WTC11 (cell line): ENCODE measurements at regions of chr6 and their contacts with region 1.

Region 1: DNA sequence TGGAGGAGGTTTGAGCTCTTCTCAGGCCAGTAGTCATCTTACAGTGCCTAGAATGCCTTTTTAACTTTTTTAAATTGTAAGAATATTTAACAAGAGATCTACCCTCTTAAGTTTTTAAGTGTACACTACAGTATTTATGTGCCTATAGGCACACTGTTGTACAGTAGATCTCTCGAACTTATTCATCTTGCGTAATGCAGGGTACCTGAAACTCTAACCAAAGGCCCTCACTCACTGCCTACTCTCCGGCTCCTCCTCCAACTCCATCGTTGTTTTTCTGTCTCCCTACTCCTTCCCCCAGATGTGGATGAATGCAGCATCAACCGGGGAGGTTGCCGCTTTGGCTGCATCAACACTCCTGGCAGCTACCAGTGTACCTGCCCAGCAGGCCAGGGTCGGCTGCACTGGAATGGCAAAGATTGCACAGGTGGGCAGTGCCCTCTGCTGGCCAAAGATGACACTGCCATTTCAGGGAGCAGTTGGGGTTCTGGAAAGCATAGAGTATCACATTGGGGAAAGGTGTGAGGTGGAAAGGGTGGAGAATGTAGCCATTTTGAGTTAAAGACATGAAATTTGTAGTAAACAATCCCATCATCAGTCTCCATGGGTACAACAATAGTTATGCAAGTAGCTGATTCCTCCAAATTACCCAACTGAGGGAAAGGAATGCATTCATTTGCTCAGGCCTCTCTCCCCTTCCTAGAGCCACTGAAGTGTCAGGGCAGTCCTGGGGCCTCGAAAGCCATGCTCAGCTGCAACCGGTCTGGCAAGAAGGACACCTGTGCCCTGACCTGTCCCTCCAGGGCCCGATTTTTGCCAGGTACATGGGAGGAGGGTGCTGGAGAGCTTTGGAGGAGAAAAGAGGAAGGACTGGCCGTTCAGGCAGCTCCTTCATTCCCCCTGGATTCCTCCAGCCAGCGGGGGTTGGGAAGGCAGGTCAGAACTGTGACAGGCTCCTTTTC is 18.4 kb upstream of the ZNF76 start:
- DNase-seq: peak; percentile 95
- ATAC-seq: peak; percentile 70
- H3K4me3 Mint-ChIP-seq: no peak overlapping the region
- H3K27ac Mint-ChIP-seq: no peak overlapping the region
- H3K4me1 Mint-ChIP-seq: peaks cover 52% of the 10 kb centered on the region
- H3K27me3 Mint-ChIP-seq: peaks cover 48% of the 10 kb centered on the region
- CTCF ChIP-seq: peak; percentile 98

Region 2: DNA sequence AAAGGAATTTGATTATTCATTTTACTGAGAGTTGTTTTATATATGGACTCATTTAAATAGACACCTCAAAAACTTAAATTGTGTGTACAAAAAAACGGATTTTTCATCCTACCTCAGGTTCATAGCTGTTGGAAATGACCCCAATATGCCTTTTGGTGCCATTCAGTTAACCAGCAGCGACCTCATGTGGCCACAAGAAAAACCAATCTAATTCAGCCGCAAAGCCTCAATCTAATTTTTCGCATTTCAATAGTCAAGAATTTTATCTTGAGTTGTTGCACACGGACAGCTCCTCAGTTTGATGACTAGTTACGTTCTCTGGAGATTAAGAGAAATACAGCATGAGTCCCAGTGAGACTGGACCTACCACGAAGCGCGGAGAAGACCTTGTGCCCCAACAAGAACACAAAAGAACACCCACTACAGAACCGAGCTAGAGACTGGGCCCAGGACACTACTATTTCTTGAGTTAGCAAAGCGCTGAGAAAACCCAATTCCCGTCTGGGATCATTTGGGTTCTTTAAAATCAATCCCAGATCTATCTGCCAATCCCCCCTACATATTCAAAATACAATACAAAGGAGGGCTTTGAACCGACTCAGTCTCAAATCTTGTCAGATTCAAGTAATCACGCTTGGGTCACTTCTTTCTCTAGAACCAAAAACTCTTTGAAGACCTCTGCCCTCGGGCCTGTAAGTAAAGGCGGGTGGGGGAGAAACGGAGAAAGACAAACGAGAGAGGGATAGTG is 101.0 kb before region 1 on chr6:
- CTCF ChIA-PET with region 1: interaction called, 20 read pairs
- POLR2A ChIA-PET with region 1: no interaction called
- DNase-seq: peak; percentile 39
- ATAC-seq: peak; percentile 25
- H3K4me3 Mint-ChIP-seq: no peak overlapping the region
- H3K27ac Mint-ChIP-seq: no peak overlapping the region
- H3K4me1 Mint-ChIP-seq: peaks cover 9% of the 10 kb centered on the region
- H3K27me3 Mint-ChIP-seq: peaks cover 24% of the 10 kb centered on the region
- CTCF ChIP-seq: peak; percentile 76

Region 3: GRCh38 chr6:35173427-35174087 is 67.6 kb before region 1 on chr6:
- CTCF ChIA-PET with region 1: interaction called, 23 read pairs
- POLR2A ChIA-PET with region 1: no interaction called
- DNase-seq: no peak
- ATAC-seq: peak; percentile 32
- H3K4me3 Mint-ChIP-seq: no peak overlapping the region
- H3K27ac Mint-ChIP-seq: no peak overlapping the region
- H3K4me1 Mint-ChIP-seq: peaks cover 4% of the 10 kb centered on the region
- H3K27me3 Mint-ChIP-seq: peaks cover 3% of the 10 kb centered on the region; the same call in 1 of the 2 replicates
- CTCF ChIP-seq: no peak

Region 4: DNA sequence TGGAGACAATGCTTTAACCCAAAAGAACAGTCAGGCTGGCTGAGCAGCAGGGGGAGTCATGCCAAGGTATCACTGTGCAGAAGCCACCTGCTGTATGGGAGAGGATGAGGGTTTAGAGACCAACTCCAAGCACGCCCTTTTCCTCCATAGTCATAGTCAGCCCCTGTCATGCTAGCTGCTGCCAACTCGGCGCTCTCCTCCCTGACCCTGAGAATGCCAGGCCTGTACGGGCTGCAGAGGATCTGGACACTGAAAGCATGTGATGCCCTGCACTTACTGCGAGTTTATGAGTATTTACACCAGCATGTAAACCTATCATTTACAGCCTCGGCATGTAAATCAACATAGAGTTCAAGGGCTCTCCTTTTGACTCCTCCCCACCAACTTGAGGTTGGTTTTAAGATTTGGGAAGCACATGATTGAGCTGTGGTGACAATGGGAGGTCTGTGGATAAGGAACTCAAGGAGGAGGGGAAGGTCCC is 39.0 kb before region 1 on chr6:
- CTCF ChIA-PET with region 1: interaction called, 107 read pairs
- POLR2A ChIA-PET with region 1: interaction called, 3 read pairs
- DNase-seq: no peak
- ATAC-seq: peak; percentile 65
- H3K4me3 Mint-ChIP-seq: no peak overlapping the region
- H3K27ac Mint-ChIP-seq: no peak overlapping the region
- H3K4me1 Mint-ChIP-seq: peaks cover 4% of the 10 kb centered on the region
- H3K27me3 Mint-ChIP-seq: peaks cover 39% of the 10 kb centered on the region
- CTCF ChIP-seq: no peak

Region 5: DNA sequence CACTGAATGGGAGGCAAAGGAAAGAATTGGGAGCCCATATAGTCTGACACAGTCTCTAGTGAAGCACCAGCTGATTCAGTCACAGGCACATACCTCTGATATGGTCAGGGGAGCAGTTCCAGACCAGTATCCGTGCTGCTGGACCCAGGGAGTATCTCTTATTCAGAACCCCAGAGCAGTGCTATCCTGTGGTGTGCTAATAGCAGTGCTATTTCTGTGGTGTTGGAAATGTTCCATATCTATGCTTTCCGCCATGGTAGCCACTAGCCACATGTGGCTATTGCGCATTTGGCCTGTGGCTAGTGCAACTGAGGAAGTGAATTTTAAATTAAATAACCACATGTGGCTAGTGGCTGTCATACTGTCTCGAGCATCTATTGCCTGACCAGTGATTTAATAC is 16.4 kb before region 1 on chr6:
- CTCF ChIA-PET with region 1: interaction called, 40 read pairs
- POLR2A ChIA-PET with region 1: interaction called, 3 read pairs
- DNase-seq: no peak
- ATAC-seq: no peak
- H3K4me3 Mint-ChIP-seq: no peak overlapping the region
- H3K27ac Mint-ChIP-seq: no peak overlapping the region
- H3K4me1 Mint-ChIP-seq: 0 out of 2 replicates have a peak, but pooled peaks cover 3% of the 10 kb centered on the region
- H3K27me3 Mint-ChIP-seq: peaks cover 60% of the 10 kb centered on the region
- CTCF ChIP-seq: no peak

Region 6: DNA sequence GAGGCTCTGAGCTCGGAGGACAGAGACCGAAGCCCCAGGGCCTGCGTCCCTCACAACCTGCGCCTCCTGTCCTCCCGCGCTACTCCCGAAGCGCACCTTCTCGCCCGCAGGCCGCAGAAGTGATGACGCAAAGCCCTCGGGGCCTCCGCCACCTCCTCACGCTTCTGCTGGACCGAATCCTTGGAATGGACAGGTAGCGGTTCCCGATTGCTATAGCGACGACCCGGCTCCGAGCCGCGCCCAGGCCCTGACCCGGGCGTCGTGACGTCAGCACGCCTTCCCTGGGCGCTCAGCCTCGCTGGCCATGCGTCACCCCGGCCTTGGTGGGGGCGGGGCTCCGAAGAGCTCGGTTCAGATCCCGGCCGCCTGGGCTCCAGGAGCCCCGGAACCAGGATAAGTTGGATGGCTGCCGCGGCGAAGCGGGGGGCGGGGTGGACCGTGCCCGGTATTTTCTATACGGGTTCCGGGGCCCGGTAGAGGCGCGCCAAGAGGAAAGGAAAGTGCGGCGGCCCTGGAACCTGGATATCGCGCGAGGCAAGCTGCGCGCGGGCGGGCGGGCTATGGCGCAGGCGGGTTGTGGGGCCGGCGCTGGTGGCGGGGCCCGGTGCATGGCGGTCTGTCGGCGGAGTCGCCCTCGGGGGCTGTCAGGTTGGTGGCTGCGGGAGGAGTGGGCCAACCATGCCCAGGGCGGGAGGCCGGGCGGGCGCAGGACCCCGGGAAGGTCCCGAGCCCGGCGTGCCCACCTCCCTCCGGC is 18.2 kb after region 1 on chr6 and contains the start of gene ZNF76:
- CTCF ChIA-PET with region 1: interaction called, 19 read pairs
- POLR2A ChIA-PET with region 1: interaction called, 3 read pairs
- DNase-seq: peak; percentile 97
- ATAC-seq: peak; percentile 83
- H3K4me3 Mint-ChIP-seq: peak within 1 kb of the TSS; percentile 92
- H3K27ac Mint-ChIP-seq: peak within 1 kb of the TSS; percentile 92
- H3K4me1 Mint-ChIP-seq: peaks cover 9% of the 10 kb centered on the region
- H3K27me3 Mint-ChIP-seq: no peaks in the 10 kb centered on the region
- CTCF ChIP-seq: no peak
- total RNA-seq, gene ZNF76: 21.4 to 25.8 TPM (median 23.7 TPM) in 3 replicates

Region 7: DNA sequence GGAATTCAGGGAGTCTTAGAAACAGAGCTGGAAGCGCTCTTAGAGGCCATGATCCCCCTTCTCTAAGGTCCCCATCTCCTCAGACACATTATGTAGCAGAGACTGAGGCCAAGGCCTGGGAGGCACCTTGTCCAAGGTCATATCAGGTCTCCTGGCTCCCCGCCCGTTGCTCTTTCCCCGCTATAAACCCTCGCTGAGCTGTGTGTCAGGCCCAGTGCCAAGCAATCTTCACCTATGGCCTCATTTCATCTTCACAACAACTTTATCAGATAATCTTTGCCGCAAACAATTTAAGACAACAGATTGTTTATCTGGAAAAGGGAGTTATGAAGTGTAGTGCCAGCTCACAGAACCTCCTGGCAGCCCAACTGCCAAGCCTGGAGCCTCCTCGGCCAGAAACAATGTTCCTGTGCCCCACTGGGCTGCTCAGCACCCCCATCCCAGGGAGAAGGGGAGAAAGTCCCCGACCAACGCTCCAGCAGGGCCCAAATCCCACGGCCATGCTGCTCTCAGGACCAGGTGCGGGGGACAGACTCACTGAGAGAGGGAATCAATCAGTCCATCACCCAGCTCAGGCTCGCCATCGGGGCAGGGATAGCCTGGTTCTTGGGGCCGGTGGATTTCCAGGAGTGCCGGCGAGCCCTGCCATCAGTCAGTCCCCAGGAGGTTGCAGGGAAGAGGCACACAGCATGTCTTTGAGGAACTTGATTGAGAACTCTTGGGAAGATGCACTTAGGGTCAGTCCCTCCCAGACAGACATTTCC is 194.1 kb after region 1 on chr6:
- CTCF ChIA-PET with region 1: no interaction called
- POLR2A ChIA-PET with region 1: no interaction called
- DNase-seq: no peak
- ATAC-seq: no peak
- H3K4me3 Mint-ChIP-seq: no peak overlapping the region
- H3K27ac Mint-ChIP-seq: no peak overlapping the region; the same call in 1 of the 2 replicates
- H3K4me1 Mint-ChIP-seq: peaks cover 3% of the 10 kb centered on the region; the same call in 1 of the 2 replicates
- H3K27me3 Mint-ChIP-seq: no peaks in the 10 kb centered on the region
- CTCF ChIP-seq: no peak